Sciatic nerve (tissue), 2 donors: ENCODE measurements at regions of chr10 and their contacts with region 1.

Region 1: DNA sequence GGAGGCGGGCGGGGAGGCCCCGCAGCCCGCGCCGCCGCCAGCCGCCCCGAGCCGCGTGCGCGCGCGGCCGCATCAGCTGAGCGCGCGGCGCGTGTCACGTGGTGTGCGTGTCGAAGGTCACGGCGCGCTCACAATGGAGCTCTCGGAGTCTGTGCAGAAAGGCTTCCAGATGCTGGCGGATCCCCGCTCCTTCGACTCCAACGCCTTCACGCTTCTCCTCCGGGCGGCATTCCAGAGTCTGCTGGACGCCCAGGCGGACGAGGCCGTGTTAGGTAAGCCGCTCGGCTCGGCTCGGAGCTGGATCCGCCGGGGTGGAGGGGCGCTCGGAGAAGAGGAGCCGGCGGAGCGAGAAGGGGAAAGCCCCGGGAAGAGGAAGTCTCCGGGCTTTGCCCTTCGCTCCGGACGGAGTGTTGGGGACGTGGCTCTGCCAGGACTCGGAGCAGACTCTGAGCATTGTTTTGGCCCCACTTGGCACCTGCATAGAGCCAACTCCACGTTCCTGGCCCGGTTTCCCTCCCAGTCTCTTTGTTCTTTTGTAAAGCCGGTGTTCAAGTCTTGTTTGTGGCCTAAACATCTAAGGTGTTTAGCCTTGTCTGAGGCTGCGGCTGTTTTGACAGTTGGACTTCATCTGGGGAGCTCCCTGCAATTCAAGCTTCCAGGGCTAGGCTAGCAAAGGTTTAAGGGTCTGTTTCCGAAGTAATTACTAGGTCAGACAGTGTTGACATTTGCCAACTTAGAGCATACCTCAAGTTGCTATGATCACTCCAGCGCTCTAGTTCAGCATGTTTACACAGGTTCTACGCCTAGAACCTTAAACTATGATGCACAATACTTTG is at the start of gene COMMD3:
- DNase-seq: peak; percentile 95
- ATAC-seq: peak; percentile 95
- total RNA-seq, gene COMMD3: 53.3 TPM

Region 2: DNA sequence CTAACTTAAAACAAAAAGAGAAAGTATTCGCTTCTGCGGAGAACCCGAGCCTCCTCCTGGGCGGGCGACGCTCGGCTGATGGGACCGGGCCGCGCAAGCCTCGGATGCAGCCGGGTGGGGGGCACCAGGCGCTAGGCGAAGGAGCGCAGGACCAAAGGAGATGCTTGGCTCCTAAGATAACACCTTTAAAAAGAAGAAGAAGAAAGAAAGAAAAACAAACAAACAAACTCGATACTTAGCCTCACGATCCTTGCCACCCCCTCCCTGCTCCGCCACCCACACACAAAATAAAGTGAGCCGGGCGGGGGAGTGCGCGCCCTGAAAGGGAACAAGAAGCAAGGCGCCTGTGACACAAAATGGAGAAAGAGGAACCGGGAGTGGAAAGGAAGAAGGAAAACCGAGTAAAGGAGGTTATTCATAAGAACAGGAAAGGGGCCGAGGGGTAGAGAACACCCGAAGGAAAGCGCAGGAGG is 64.7 kb before region 1 on chr10:
- intact Hi-C with region 1: loop called (anchors 10 kb)
- DNase-seq: peak; percentile 84
- ATAC-seq: peak; percentile 69

Region 3: DNA sequence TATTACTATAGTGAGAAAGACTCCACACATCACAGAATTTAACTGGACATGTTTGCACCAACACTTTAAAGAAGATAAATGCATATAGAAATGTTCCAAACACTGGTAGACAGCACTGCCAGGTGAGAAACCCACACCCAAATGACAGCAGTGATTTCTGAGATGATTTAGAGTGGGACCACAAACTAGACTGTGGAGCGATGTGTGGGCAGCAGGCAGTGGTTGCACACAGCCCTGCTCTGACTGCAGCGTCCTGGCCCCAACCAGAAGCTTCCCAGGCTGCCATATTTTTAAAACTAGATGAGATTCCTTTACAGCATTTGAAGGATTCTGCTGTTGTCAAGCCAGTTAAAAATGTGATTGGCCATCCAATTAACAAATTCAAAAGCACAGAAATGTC is 48.0 kb before region 1 on chr10:
- intact Hi-C with region 1: no loop called
- DNase-seq: no peak
- ATAC-seq: no peak

Region 4: GRCh38 chr10:22340362-22341189 is 24.1 kb after region 1 on chr10:
- intact Hi-C with region 1: loop called (anchors 1 kb)
- DNase-seq: peak; percentile 81
- ATAC-seq: peak; percentile 89

Region 5: DNA sequence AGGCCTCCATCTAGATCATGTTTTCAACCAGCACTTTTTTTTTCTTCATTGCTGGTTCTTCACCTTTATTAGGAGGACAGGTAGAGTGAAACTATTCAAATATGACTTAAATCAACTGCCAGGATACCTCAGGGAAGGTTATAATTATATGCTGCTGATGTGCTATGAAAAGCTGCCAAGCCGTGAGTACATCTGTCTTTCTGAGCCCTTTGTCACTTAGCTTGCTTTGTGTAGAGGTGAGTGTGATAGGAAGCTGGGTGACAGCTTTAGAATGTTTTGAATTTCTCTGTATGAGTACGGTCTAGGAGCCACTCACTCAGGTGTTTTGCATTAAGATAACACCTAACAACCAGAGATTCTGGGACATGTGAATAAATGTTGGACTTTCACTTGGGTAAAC is 1487.6 kb after region 1 on chr10:
- intact Hi-C with region 1: no loop called
- DNase-seq: no peak
- ATAC-seq: no peak